ENCODE measurements at regions of chr3 and their contacts with region 1.

Region 1: DNA sequence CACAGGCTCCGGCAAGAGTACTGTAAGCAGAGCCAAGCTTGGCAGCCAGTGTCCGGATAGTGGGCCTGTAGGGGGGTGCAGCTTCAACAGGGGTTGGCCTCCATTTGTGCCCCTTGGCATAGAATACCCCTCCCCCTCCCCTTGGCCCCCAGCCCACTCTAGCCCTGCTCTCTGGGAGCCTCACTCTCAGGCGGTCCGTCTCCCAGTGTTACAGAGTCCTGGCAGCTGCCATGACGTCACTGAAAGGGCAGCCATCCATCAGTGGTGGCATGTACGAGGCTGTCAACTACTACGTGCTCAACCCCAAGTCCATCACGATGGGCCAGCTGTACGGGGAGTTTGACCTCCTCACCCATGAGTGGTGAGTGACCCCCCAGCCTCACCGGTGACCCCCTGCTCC is 50.4 kb downstream of the DNAH1 start:
- DNase-seq: no peak
- H3K4me3 ChIP-seq: no peak overlapping the region
- H3K27ac ChIP-seq: no peak overlapping the region
- H3K4me1 ChIP-seq: peaks cover 0 to 11% (median 0%) of the 10 kb centered on the region in 4 experiments; a peak in 3 of 7 replicates
- H3K27me3 ChIP-seq: peaks cover 0 to 1% (median 0%) of the 10 kb centered on the region in 4 experiments; a peak in 2 of 7 replicates
- CTCF ChIP-seq: no peak
- EP300 ChIP-seq: no peak
- POLR2A ChIP-seq: no peak
- RAD21 ChIP-seq: no peak

Region 2: GRCh38 chr3:52331906-52332305 is 34.6 kb before region 1 on chr3:
- CTCF ChIA-PET with region 1: no interaction called
- POLR2A ChIA-PET with region 1: no interaction called
- DNase-seq: no peak
- H3K4me3 ChIP-seq: no peak overlapping the region
- H3K27ac ChIP-seq: no peak overlapping the region
- H3K4me1 ChIP-seq: no peaks in the 10 kb centered on the region
- H3K27me3 ChIP-seq: no peaks in the 10 kb centered on the region; a peak in 1 of 7 replicates
- CTCF ChIP-seq: no peak
- EP300 ChIP-seq: no peak
- POLR2A ChIP-seq: no peak
- RAD21 ChIP-seq: no peak

Region 3: DNA sequence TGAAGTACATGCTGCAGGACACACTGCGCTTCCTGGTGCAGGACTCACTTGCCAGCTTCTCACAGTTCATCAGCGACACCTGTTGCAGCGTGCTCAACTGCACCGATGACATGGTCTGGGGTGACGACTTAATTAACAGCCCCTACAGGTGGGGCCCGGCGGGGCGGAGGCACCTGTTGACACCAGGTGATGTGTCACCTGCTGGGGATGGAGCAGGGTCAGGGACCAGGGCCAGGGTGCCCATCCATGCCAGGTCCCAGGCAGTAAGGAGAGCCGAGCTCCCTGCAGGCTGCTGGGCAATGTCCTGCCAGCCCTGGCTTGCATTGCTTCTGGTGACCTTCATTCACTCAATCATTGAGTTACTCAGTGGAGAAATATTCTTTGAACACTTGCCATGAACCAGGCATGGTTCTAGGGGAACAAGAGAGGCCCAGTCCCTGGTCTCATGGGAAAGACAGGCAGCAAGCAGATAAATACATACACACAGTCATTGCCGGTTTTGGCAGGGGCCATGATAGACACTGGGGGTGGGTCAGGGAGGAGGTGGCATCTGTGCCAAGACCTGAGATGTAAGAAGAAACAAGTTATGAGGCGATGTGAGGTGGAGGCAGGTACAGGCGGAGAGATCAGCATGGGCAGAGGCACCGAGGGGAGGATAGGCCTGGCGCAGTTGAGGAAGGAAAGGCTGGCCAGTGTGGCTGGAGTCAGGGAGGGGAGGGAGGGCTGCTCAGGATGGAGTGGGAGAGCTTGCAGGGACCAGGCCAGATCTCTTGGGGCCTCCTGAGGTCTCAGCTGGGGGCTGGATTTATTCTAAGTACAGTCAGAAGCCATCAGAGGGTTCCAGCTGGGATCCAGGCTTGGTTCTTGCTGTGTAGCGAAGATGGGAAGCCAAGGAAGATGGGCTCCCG is 19.6 kb before region 1 on chr3:
- CTCF ChIA-PET with region 1: interaction called, 81 read pairs
- POLR2A ChIA-PET with region 1: interaction called, 8 read pairs
- DNase-seq: no peak
- H3K4me3 ChIP-seq: no peak overlapping the region
- H3K27ac ChIP-seq: no peak overlapping the region
- H3K4me1 ChIP-seq: no peaks in the 10 kb centered on the region
- H3K27me3 ChIP-seq: no peaks in the 10 kb centered on the region; a peak in 1 of 7 replicates
- CTCF ChIP-seq: no peak
- EP300 ChIP-seq: no peak
- POLR2A ChIP-seq: no peak
- RAD21 ChIP-seq: no peak

Region 4: DNA sequence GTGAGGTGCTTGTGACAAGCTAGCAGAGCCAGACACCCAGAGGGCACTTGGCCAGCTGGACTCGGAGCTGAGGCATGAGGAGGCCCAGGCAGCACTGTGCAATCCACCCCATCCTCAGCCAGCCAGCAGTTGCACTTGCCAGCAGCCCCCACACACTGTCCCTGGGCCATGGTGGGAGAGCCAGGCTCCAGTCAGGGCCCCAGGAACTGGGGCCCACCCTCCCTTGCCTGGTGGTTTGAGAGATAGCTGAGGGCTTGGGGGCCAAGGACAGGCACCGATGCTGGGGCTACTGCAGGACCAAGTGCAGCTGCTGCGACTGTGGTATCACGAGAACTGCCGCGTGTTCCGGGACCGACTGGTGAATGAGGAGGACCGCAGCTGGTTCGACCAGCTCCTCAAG is 13.1 kb after region 1 on chr3:
- CTCF ChIA-PET with region 1: interaction called, 271 read pairs
- POLR2A ChIA-PET with region 1: interaction called, 8 read pairs
- DNase-seq: no peak
- H3K4me3 ChIP-seq: no peak overlapping the region
- H3K27ac ChIP-seq: no peak overlapping the region
- H3K4me1 ChIP-seq: no peaks in the 10 kb centered on the region; a peak in 1 of 7 replicates
- H3K27me3 ChIP-seq: no peaks in the 10 kb centered on the region; a peak in 3 of 7 replicates
- CTCF ChIP-seq: no peak
- EP300 ChIP-seq: no peak
- POLR2A ChIP-seq: no peak
- RAD21 ChIP-seq: no peak